Activated CD8-positive, alpha-beta memory T cell treated with anti-CD3 and anti-CD28 coated beads, Interleukin-2, amount 10 ng/mL, durations not matched to agents 7 days and 5 days (primary cell): ENCODE measurements at regions of chr12 and their contacts with region 1.

Region 1: DNA sequence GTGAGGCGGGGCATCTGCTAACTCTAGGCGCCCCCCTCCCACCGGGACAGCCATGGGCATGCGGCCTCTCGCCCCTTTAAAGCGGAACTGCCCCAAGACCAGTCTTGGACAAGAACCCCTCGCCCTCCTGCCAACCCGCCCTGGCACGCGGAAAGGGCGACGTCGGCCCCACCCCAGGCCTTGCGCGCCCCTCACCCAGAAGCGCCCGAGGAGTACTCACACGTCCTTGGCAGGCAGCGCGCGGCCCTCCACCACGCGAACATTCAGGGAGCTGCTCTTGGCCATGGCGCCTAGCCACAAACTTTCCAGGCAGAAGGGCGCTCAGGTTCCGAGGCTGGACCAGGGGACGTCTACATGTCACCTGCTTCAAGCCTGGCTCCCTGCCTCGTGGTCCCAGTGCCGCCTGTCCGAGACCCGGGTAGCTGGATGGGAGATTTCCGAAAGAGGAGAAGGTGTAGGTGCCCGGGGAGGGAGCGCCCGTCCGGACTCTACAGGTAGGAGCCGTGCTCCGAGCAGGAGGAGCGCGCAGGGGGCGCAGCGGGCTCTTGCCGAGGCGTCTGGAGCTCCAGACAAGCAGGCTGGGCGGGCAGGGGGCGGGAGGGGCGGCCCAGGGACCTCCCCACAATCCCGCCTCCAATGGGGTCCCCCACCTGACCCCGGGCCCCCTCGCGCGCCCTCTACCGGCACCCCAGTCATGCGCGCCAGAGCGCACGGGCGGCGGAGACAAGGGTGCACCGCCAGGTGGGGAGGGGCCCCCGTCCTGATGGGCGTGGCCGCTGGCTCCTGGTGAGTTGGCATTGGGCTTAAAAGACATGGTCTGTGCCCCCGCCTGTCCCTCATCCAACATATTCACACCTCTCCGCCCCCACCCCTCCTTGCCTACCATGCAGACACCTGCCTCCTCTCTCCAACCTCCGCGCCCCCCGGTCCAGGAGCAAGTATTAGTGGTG is at the start of gene RASAL1:
- DNase-seq: peak; percentile 77
- ATAC-seq: peak; percentile 90
- H3K4me3 Mint-ChIP-seq: peak within 1 kb of the TSS; percentile 65
- H3K27ac Mint-ChIP-seq: peak within 1 kb of the TSS; percentile 20
- H3K4me1 Mint-ChIP-seq: peaks cover 12% of the 10 kb centered on the region
- H3K27me3 Mint-ChIP-seq: peaks cover 17% of the 10 kb centered on the region
- total RNA-seq, gene RASAL1: not detected

Region 2: DNA sequence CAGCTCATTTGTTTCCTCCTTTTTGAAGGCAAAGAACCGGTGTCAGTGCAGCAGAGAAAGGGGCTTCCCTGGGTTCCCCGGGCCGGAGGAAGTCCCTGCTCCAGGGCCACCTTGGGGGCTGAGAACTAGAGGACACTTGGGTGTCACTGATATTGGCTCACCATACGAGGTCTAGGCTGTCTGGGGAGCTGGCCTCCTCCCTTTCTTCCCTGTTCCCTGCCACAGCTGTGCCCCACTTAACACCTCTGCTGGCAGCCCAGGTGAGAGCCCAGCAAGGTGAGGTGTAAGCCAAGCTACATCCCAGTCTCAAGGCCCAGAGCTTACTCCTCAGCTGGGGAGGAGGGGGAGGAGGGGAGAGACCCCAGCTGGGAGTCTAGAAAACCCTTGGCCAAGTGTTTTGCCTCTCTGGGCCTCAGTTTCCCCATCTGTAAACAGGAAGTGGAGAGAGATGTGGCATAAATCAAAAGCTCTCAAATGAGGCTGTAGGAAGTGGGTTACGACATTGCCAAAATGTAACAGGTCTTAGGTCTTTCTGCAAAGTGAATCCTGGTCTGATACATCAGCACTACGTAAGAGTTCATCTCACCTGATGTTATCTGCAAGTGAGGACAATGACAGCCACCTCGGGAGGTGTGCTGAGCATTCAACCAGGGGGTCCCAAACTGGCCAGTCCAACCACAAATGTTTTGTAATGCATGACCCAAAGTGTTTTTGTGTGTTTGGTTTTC is 25.4 kb before region 1 on chr12:
- CTCF ChIA-PET with region 1: no interaction called
- DNase-seq: no peak
- ATAC-seq: no peak
- H3K4me3 Mint-ChIP-seq: no peak overlapping the region
- H3K27ac Mint-ChIP-seq: no peak overlapping the region
- H3K4me1 Mint-ChIP-seq: peaks cover 12% of the 10 kb centered on the region
- H3K27me3 Mint-ChIP-seq: peaks cover under 1% of the 10 kb centered on the region

Region 3: GRCh38 chr12:113152835-113153814 is 17.7 kb after region 1 on chr12:
- CTCF ChIA-PET with region 1: interaction called, 20 read pairs
- DNase-seq: peak; percentile 68
- ATAC-seq: peak; percentile 85
- H3K4me3 Mint-ChIP-seq: peak overlapping the region; percentile 44
- H3K27ac Mint-ChIP-seq: no peak overlapping the region
- H3K4me1 Mint-ChIP-seq: peaks cover 21% of the 10 kb centered on the region
- H3K27me3 Mint-ChIP-seq: peaks cover 41% of the 10 kb centered on the region

Region 4: DNA sequence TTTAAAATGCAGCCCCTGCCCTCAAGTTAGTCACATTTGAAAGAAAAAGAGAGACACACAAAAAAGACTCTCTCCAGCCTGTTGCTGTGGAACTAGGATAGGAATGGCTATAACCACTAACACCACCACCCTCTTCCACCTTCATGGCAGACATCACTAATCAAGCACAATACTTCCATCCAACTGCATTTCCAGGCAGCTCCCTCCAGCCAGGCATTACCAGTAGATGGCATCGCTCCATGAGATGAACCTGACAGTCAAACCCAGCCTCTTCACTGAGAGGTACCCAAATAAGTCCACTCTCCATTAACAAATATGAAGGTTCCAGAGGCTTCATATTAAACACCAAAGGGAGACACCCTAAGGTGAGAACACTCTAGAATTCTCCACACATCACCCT is 175.0 kb after region 1 on chr12:
- CTCF ChIA-PET with region 1: no interaction called
- DNase-seq: no peak
- ATAC-seq: no peak
- H3K4me3 Mint-ChIP-seq: no peak overlapping the region
- H3K27ac Mint-ChIP-seq: no peak overlapping the region
- H3K4me1 Mint-ChIP-seq: no peaks in the 10 kb centered on the region
- H3K27me3 Mint-ChIP-seq: no peaks in the 10 kb centered on the region